Activated CD4-positive, alpha-beta memory T cell treated with anti-CD3 and anti-CD28 coated beads for 36 hours (primary cell): ENCODE measurements at regions of chr7 and their contacts with region 1.

Region 1: DNA sequence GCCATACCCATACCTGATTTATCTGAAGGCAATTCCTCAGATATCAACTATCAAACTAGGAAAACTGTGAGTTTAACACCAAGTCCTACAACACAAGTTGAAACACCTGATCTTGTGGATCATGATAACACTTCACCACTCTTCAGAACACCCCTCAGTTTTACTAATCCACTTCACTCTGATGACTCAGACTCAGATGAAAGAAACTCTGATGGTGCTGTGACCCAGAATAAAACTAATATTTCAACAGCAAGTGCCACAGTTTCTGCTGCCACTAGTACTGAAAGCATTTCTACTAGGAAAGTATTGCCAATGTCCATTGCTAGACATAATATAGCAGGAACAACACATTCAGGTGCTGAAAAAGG is 69.0 kb upstream of the RSBN1L start:
- DNase-seq: no peak
- H3K4me3 Mint-ChIP-seq: no peak overlapping the region
- H3K27ac Mint-ChIP-seq: no peak overlapping the region
- H3K4me1 Mint-ChIP-seq: no peaks in the 10 kb centered on the region
- H3K27me3 Mint-ChIP-seq: no peaks in the 10 kb centered on the region

Region 2: DNA sequence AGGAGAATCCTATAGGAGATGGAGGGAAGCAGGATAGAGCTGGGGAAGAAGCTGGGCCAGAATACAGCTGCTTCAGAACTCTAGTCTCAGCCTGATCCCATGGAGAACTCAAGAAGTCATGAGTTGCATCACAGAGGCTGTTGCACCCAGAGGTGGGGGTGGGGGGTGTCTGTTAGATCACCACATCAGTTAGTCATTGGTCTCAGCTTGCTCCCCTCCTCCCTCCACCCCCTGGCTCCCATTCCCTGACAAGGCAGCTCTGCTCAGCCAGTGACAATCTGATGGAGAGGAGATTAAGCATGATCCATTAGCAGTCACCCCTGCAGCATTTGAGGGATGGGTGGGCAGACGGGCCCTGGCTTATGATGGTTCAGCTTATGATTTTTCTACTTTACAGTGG is 369.3 kb before region 1 on chr7:
- CTCF ChIA-PET with region 1: no interaction called
- POLR2A ChIA-PET with region 1: no interaction called
- intact Hi-C with region 1: no loop called
- DNase-seq: peak; percentile 9
- H3K4me3 Mint-ChIP-seq: no peak overlapping the region
- H3K27ac Mint-ChIP-seq: no peak overlapping the region
- H3K4me1 Mint-ChIP-seq: no peaks in the 10 kb centered on the region
- H3K27me3 Mint-ChIP-seq: no peaks in the 10 kb centered on the region

Region 3: DNA sequence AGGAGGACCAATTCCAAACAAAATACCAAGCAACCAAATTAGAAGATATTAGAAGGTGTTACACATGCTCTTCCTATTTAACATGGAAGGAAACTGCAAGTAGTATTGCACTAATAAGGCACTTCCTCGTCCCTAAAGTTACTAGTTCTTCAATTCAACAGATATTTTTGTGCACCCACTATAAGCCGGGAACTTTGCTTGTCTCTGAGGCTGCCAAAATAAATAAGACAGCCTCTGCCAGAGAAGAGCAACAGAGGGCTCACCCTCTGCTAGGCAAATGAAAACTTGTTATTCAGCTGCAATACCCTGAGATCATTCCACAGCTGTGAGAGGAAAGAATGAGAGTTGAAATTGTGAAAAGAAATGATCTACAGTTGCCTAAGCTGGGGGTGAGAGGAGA is 173.8 kb before region 1 on chr7:
- CTCF ChIA-PET with region 1: no interaction called
- POLR2A ChIA-PET with region 1: no interaction called
- intact Hi-C with region 1: no loop called
- DNase-seq: no peak
- H3K4me3 Mint-ChIP-seq: no peak overlapping the region
- H3K27ac Mint-ChIP-seq: no peak overlapping the region
- H3K4me1 Mint-ChIP-seq: no peaks in the 10 kb centered on the region
- H3K27me3 Mint-ChIP-seq: no peaks in the 10 kb centered on the region

Region 4: DNA sequence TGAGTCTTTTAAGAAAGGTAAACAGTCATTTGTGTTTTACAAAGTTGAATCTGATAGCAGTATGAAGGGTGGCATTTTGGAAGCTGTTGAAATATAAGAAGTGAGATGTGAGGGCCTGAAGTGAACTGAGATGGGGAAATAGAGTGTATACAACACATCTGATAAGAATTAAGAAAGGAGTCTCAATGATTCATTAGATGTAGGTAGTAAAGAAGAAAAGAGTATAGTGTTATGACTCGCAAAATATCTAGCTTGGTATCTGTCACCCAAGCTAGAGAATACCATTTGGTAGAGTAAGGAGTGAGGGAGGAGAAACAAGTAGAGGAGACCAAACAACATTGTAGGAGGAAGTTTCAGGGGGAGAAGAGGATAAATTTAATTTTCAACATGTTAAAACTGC is 84.9 kb before region 1 on chr7:
- CTCF ChIA-PET with region 1: no interaction called
- POLR2A ChIA-PET with region 1: no interaction called
- intact Hi-C with region 1: loop called (anchors 5 kb)
- DNase-seq: no peak
- H3K4me3 Mint-ChIP-seq: no peak overlapping the region
- H3K27ac Mint-ChIP-seq: no peak overlapping the region
- H3K4me1 Mint-ChIP-seq: peaks cover 36% of the 10 kb centered on the region
- H3K27me3 Mint-ChIP-seq: no peaks in the 10 kb centered on the region

Region 5: DNA sequence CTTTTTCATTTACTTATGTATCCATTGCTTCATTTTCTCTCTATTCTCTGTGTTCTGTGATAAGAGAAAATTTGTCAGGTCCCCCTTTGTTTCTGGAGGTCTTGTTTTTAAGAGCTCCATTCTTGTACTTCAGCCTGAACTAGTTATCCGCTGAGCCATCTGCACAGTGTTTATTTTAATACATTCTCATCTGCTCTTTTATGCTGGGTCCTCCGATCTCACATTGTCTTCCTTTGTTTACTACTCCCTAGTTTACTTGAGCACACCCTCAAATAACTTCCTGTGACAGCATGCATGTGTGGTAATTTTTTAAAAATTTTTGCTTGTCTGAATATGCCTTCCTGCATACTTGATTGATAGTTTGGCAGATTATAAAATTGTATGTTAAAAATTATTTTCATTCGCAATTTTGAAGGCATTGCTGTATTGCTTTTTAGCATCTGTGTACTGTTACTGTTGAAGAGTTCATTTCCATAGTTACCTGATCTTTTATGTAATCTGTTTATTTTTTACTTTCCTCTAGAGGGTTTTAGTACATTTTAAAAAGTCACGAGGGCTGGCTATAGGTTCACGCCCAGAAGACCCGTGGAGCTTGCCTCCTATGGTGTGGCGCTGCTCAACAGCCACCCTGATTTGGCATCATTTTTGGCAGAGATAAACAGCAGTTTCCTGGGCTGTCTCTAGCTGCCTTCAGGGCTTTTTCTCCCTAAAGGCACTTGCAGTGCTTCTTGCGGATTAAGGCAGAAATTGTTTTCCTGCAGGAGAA is 100.8 kb after region 1 on chr7:
- CTCF ChIA-PET with region 1: no interaction called
- POLR2A ChIA-PET with region 1: no interaction called
- intact Hi-C with region 1: no loop called
- DNase-seq: no peak
- H3K4me3 Mint-ChIP-seq: no peak overlapping the region
- H3K27ac Mint-ChIP-seq: no peak overlapping the region
- H3K4me1 Mint-ChIP-seq: peaks cover 48% of the 10 kb centered on the region
- H3K27me3 Mint-ChIP-seq: no peaks in the 10 kb centered on the region